Naive thymus-derived CD8-positive, alpha-beta T cell (primary cell): ENCODE measurements at regions of chr19 and their contacts with region 1.

Region 1: DNA sequence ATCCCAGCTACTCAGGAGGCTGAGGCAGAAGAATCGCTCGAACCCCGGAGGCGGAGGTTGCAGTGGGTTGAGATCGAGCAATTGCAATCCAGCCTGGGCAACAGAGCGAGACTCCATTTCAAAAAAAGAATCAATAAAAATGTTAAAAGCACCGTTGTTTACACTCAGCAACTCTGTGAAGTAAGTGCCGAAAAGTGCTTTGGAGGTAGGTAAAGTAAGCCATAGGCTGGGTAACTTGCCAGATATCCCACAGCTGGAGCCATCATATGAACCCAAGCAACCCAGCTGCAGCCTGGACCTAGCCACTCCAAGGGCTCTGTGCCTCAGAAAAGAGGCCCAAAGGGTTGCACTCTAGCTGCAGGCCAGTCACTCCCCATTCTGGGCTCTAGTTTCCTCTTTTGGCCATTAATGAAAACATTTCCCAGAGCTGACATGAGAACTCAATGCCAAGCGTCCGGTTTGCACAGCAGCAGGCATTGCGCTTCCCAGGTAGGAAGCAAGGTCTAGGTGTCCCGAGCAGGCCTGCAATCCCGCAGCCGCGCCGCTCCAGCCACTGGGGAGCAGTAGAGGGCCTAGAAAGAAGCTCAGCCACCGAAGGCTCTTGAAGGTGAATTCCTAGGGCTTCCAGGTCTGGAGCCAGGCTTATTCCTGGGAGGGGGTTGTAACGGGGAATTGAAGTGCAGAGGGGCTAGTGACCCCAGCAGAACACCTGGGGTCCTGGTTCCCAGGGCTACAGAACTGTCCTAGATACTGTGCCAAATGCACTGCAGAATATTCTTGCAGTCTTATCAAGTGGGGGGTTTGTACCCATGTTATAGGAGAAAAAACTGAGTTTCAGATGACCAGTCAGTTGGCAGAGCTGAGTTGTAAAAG is 4.1 kb upstream of the CD79A start:
- DNase-seq: peak; percentile 50 to 81 (median 66)
- ATAC-seq: no peak
- H3K4me3 Mint-ChIP-seq: peak overlapping the region; percentile 45 to 83 (median 59)
- H3K27ac Mint-ChIP-seq: peak overlapping the region; percentile 89 to 100 (median 98)
- H3K4me1 Mint-ChIP-seq: peaks cover 27 to 94% (median 82%) of the 10 kb centered on the region in 4 donors
- H3K27me3 Mint-ChIP-seq: no peaks in the 10 kb centered on the region

Region 2: GRCh38 chr19:41811036-41811435 is 62.0 kb before region 1 on chr19:
- POLR2A ChIA-PET with region 1: no interaction called
- DNase-seq: no peak
- ATAC-seq: no peak
- H3K4me3 Mint-ChIP-seq: no peak overlapping the region
- H3K27ac Mint-ChIP-seq: no peak overlapping the region
- H3K4me1 Mint-ChIP-seq: peaks cover 5 to 29% (median 15%) of the 10 kb centered on the region in 4 donors
- H3K27me3 Mint-ChIP-seq: peaks cover 4 to 46% (median 7%) of the 10 kb centered on the region in 5 donors

Region 3: GRCh38 chr19:41883821-41884733 is 11.1 kb after region 1 on chr19:
- POLR2A ChIA-PET with region 1: interaction called, 819 read pairs
- DNase-seq: peak; percentile 72 to 94 (median 84)
- ATAC-seq: peak; percentile 46 to 51
- H3K4me3 Mint-ChIP-seq: peak overlapping the region; percentile 94 to 99 (median 97)
- H3K27ac Mint-ChIP-seq: peak overlapping the region; percentile 94 to 100 (median 99)
- H3K4me1 Mint-ChIP-seq: peaks cover 35 to 72% (median 49%) of the 10 kb centered on the region in 4 donors
- H3K27me3 Mint-ChIP-seq: peaks cover 0 to 1% (median 0%) of the 10 kb centered on the region in 5 donors

Region 4: DNA sequence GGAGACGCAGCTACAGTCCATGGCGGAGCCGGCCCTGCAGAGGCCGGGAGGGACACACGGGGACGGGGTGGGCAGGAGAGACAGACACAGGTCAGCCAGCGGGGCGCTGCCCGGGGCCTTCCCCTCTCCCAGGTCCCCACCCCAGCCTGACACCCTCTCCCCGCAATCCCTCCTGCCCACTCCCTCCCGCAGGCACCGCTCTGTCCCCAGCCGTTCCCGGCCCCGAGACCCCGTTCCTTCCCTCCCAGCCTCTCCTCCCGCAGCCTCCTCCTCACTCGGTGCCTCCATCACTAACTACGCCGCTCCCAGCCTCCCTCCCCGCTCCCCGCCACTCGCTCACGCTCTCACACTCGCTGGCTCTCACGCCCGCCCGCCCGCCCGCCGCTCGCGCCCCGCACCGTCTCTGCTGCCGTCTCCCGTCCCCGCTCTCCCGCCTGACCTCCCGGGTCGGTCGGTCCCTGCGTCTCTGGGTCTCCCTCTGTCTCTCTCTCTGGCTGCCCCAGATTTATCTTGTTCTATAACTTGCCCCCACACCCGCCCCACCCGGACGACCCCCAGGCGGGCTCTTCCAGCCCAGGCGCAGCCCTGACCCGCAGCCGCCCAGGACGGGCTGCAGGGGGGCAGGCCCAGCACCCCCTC is 40.0 kb after region 1 on chr19:
- POLR2A ChIA-PET with region 1: interaction called, 184 read pairs
- DNase-seq: peak in 5 of 10 donors; percentile 31 to 64 (median 38)
- ATAC-seq: peak; percentile 27 to 32
- H3K4me3 Mint-ChIP-seq: peak overlapping the region in 9 of 10 donors; percentile 36 to 86 (median 55)
- H3K27ac Mint-ChIP-seq: peak overlapping the region in 5 of 10 donors; percentile 31 to 92 (median 85)
- H3K4me1 Mint-ChIP-seq: peaks cover 34 to 57% (median 42%) of the 10 kb centered on the region in 4 donors
- H3K27me3 Mint-ChIP-seq: peaks cover 0 to 3% (median 0%) of the 10 kb centered on the region in 5 donors

Region 5: DNA sequence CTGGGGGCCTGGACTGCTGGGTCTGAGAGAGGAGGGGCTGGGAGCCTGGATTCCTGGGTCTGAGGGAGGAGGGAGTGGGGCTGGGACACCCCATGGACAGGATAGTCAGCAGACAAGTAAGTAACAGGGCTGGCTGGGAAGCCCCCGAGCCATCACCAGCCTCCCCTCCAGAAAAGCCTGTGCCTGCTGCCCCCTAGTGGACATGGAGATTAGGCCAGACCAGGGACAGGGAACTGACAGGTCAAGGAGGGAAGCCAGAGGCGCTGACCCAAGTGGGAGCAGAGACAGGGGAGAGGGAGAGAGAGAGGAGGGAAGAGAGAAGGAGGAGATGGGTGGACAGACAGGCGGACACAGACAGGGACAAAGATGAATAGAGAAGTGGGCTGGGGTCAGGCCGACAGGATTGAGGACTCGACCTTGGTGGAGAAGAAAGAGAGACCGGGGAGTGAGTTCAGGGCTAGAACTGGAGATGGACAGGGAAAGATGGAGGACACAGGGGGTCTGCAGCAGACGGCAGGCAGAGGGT is 61.9 kb after region 1 on chr19:
- POLR2A ChIA-PET with region 1: interaction called, 26 read pairs
- DNase-seq: peak; percentile 64 to 90 (median 76)
- ATAC-seq: peak; percentile 72 to 77
- H3K4me3 Mint-ChIP-seq: peak overlapping the region in 9 of 10 donors; percentile 25 to 78 (median 52)
- H3K27ac Mint-ChIP-seq: peak overlapping the region; percentile 81 to 96 (median 88)
- H3K4me1 Mint-ChIP-seq: peaks cover 41 to 70% (median 61%) of the 10 kb centered on the region in 4 donors
- H3K27me3 Mint-ChIP-seq: peaks cover 0 to 7% (median 0%) of the 10 kb centered on the region in 5 donors

Region 6: DNA sequence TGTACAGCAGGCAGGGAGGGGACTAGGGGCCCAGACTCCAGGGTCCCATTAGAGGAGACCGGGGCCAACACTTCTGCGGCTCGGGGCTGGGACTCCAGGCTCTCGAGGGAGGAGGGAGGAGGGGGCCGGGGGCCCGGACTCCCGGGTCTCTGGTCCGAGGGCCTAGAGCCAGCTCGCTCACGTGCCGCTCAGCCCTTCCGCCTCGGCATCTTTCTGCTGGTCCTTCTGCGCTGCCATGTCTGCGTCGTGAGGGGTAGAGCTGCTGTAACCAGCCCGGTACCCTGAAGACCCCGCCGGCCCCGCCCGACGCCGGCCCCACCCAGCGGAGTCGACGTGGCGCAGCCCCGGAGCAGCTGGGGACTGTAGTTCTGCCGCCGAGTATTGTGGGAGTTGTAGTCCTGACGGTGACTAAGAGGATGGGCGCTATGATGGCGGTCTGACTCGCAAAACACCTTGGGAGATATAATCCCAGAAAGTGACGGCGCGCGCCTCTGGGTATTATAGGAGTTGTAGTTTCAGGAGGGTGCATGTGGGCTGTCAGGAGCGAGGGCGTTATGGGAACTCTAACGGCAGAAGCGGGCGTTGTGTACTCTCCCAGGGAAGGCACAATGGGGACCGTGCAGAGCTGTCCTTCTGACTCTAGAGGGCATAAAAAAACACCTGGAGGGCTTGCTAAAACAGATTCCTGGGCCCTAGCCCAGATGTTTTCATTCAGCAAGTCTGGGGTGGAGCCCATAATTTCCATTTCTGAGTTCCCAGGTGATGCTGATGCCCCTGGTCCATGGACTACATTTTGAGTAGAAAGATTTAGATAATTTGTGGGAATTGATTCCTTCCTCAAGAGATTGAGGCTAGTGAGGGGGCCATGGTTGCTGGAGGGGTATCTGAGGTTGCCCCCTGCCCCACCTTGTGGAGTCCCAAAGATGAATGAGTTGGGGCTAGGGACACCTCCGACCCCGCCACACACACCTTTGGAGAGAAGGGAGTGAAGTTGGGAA is 86.3 kb after region 1 on chr19 and contains the start of gene RABAC1:
- POLR2A ChIA-PET with region 1: interaction called, 22 read pairs
- DNase-seq: peak; percentile 76 to 93 (median 85)
- ATAC-seq: peak; percentile 91 to 92
- H3K4me3 Mint-ChIP-seq: peak within 1 kb of the TSS; percentile 79 to 99 (median 97)
- H3K27ac Mint-ChIP-seq: peak within 1 kb of the TSS; percentile 64 to 96 (median 92)
- H3K4me1 Mint-ChIP-seq: peaks cover 16 to 22% (median 20%) of the 10 kb centered on the region in 4 donors
- H3K27me3 Mint-ChIP-seq: no peaks in the 10 kb centered on the region
- polyA plus RNA-seq, gene RABAC1: 201 to 288 (median 231) TPM